Ascending aorta (tissue), 2 donors: ENCODE measurements at regions of chr15 and their contacts with region 1.

Region 1: GRCh38 chr15:85831415-85832113 is 36.8 kb upstream of the KLHL25 start:
- DNase-seq: peak in 1 of 2 donors; percentile 76
- H3K4me3 ChIP-seq: no peak overlapping the region
- H3K27ac ChIP-seq: no peak overlapping the region
- H3K4me1 ChIP-seq: no peaks in the 10 kb centered on the region
- H3K27me3 ChIP-seq: no peaks in the 10 kb centered on the region
- CTCF ChIP-seq: peak; percentile 22 to 68 (median 51)

Region 2: DNA sequence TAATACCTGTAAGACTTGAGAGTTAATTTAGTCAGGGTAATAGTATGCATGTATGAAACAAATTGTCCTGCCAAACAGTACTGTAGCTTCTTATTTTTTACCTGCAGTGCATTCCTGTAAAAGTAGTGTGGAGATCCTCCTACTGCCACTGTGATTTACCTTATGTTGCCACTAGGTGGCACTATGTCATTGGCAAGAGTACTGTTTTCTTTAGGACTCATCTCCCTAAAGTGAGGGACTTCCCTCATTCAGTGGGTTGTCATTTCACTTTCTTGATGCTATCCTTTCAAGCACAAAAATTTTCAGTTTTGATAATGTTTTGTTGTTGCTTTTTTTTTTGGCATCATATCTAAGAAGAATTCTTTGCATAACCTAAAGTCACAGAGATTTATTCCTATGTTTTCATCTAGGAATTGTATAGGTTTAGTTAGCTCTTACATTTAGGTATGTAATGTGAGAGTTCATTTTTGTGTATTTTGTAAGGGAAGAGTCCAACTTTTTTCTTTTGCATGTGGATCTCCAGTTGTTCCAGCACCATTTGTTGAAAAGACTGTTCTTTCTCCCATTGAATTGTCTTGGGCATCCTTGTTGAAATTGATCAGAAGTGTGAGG is 345.5 kb before region 1 on chr15:
- intact Hi-C with region 1: loop called (anchors 10 kb)
- DNase-seq: peak in 1 of 2 donors; percentile 67
- H3K4me3 ChIP-seq: no peak overlapping the region
- H3K27ac ChIP-seq: no peak overlapping the region
- H3K4me1 ChIP-seq: peaks cover 0 to 6% of the 10 kb centered on the region in 2 donors
- H3K27me3 ChIP-seq: no peaks in the 10 kb centered on the region
- CTCF ChIP-seq: peak; percentile 77 to 86 (median 79)